ENCODE measurements at regions of chr21 and their contacts with region 1.

Region 1: GRCh38 chr21:33947451-33948095 is 32.0 kb upstream of the ATP5PO start:
- DNase-seq: peak; percentile 92
- H3K4me3 Mint-ChIP-seq: peak overlapping the region; percentile 62
- H3K27ac Mint-ChIP-seq: peak overlapping the region; percentile 97
- H3K4me1 Mint-ChIP-seq: peaks cover 72% of the 10 kb centered on the region
- H3K27me3 Mint-ChIP-seq: peaks cover 4% of the 10 kb centered on the region

Region 2: GRCh38 chr21:33931799-33932390 is 15.7 kb before region 1 on chr21:
- CTCF ChIA-PET with region 1: interaction called, 13 read pairs
- POLR2A ChIA-PET with region 1: interaction called, 128 read pairs
- intact Hi-C with region 1: loop called (anchors 1 kb)
- DNase-seq: no peak
- H3K4me3 Mint-ChIP-seq: peak overlapping the region; percentile 92
- H3K27ac Mint-ChIP-seq: peak overlapping the region; percentile 99
- H3K4me1 Mint-ChIP-seq: peaks cover 41% of the 10 kb centered on the region
- H3K27me3 Mint-ChIP-seq: no peaks in the 10 kb centered on the region

Region 3: GRCh38 chr21:33993286-33994231 is 46.0 kb after region 1 on chr21:
- CTCF ChIA-PET with region 1: no interaction called
- POLR2A ChIA-PET with region 1: no interaction called
- intact Hi-C with region 1: no loop called
- DNase-seq: no peak
- H3K4me3 Mint-ChIP-seq: no peak overlapping the region
- H3K27ac Mint-ChIP-seq: no peak overlapping the region
- H3K4me1 Mint-ChIP-seq: peaks cover 12% of the 10 kb centered on the region
- H3K27me3 Mint-ChIP-seq: no peaks in the 10 kb centered on the region

Region 4: GRCh38 chr21:34008618-34009017 is 61.0 kb after region 1 on chr21:
- CTCF ChIA-PET with region 1: no interaction called
- POLR2A ChIA-PET with region 1: interaction called, 26 read pairs
- intact Hi-C with region 1: loop called (anchors 1 kb)
- DNase-seq: peak; percentile 90
- H3K4me3 Mint-ChIP-seq: no peak overlapping the region
- H3K27ac Mint-ChIP-seq: peak overlapping the region; percentile 42
- H3K4me1 Mint-ChIP-seq: peaks cover 19% of the 10 kb centered on the region
- H3K27me3 Mint-ChIP-seq: no peaks in the 10 kb centered on the region

Region 5: DNA sequence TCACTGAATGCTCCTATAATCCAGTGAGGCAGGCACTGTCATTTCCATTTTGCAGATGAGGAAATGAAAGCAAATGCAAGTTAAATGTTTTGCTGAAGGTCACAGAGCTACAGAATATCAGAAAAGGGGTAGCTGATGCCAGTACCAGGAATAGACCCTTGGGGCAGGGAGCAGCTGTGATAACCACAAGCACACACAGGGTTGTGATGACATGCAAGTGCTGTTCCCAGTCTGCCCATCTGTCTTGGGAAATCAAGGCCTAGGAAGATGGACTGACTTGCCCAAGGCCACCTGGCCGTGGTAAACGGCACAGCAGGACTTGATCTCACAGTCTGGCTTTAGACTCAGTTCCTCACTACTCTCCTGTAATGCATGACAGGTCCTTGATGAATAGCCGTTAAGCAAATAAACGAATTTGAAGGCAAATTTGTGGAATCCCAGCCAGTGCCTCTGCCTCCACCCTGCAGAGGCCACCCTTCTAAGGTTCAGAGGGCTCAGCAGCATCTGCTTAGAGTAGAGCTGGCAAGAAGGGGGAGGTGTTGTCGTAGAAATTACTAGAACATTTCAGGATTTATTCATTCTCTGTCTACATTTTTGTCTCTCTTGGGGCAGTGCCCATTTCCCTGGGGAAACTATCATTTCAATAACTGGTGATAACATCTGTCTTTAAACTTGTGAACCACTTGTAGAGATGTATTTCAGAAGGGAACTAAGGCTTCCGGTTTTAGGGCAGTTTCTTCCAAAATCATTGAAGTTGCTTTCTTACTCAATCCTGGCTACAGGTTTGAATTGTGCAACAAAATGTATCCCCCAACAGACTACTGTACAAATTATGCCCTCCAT is 72.7 kb after region 1 on chr21:
- CTCF ChIA-PET with region 1: interaction called, 3 read pairs
- POLR2A ChIA-PET with region 1: interaction called, 20 read pairs
- intact Hi-C with region 1: loop called (anchors 2 kb)
- DNase-seq: no peak
- H3K4me3 Mint-ChIP-seq: no peak overlapping the region
- H3K27ac Mint-ChIP-seq: no peak overlapping the region
- H3K4me1 Mint-ChIP-seq: peaks cover 20% of the 10 kb centered on the region
- H3K27me3 Mint-ChIP-seq: no peaks in the 10 kb centered on the region

Region 6: DNA sequence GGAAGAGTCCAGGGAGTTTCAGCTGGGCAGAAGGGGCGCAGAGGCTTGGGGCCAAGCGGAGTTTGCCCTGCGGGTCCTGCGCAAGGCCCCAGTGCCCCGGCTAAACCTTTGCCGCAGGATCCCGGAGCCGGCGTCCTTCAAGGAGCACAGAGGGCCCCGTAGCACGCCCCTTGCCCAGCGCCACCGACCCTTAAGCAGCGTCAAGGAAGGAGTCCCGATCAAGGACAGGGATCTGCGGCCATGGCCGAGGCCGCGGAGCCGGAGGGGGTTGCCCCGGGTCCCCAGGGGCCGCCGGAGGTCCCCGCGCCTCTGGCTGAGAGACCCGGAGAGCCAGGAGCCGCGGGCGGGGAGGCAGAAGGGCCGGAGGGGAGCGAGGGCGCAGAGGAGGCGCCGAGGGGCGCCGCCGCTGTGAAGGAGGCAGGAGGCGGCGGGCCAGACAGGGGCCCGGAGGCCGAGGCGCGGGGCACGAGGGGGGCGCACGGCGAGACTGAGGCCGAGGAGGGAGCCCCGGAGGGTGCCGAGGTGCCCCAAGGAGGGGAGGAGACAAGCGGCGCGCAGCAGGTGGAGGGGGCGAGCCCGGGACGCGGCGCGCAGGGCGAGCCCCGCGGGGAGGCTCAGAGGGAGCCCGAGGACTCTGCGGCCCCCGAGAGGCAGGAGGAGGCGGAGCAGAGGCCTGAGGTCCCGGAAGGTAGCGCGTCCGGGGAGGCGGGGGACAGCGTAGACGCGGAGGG is 721.7 kb after region 1 on chr21:
- CTCF ChIA-PET with region 1: no interaction called
- POLR2A ChIA-PET with region 1: no interaction called
- intact Hi-C with region 1: no loop called
- DNase-seq: peak; percentile 23
- H3K4me3 Mint-ChIP-seq: peak overlapping the region; percentile 6
- H3K27ac Mint-ChIP-seq: no peak overlapping the region
- H3K4me1 Mint-ChIP-seq: peaks cover 9% of the 10 kb centered on the region
- H3K27me3 Mint-ChIP-seq: peaks cover 56% of the 10 kb centered on the region

Measured in activated CD4-positive, alpha-beta memory T cell treated with anti-CD3 and anti-CD28 coated beads for 36 hours (primary cell).